SK-N-SH (cell line): ENCODE measurements at regions of chr2 and their contacts with region 1.

Region 1: GRCh38 chr2:24084386-24085361 is at the start of gene TP53I3:
- DNase-seq: peak; percentile 97
- H3K4me3 ChIP-seq: peak within 1 kb of the TSS; percentile 66 to 72
- H3K27ac ChIP-seq: peak within 1 kb of the TSS; percentile 86 to 95
- H3K4me1 ChIP-seq: peaks cover 0 to 21% of the 10 kb centered on the region in 2 experiments; a peak in 2 of 4 replicates
- H3K27me3 ChIP-seq: no peaks in the 10 kb centered on the region
- CTCF ChIP-seq: peak; percentile 94
- EP300 ChIP-seq: peak in 1 of 2 experiments; percentile 32; a peak in 1 of 4 replicates
- RAD21 ChIP-seq: peak; percentile 66
- polyA plus RNA-seq, gene TP53I3: 110 and 116 TPM in 2 replicates

Region 2: DNA sequence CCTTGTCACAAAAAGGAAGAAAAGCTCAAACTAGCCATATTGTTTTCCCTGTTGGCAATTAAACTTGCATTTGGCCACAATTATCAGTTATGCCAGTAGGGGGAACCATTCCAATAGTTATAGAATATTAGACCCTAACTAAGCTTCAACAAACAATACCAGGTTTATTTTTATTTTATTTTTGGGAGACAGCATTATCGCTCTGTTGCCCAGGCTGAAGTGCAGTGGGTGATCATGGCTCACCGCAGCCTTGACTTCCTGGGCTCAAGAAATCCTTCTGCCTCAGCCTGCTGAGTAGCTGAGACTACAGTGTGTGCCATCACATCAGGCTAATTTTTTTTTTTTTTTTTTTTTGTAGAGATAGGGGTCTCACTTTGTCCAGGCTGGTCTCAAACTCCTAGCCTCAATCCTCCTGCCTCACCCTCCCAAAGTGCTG is 259.9 kb before region 1 on chr2:
- CTCF ChIA-PET with region 1: interaction called, 68 read pairs
- POLR2A ChIA-PET with region 1: interaction called, 4 read pairs
- DNase-seq: peak; percentile 65
- H3K4me3 ChIP-seq: no peak overlapping the region
- H3K27ac ChIP-seq: no peak overlapping the region
- H3K4me1 ChIP-seq: no peaks in the 10 kb centered on the region; a peak in 1 of 4 replicates
- H3K27me3 ChIP-seq: no peaks in the 10 kb centered on the region
- CTCF ChIP-seq: peak; percentile 94
- EP300 ChIP-seq: no peak
- RAD21 ChIP-seq: peak; percentile 85

Region 3: GRCh38 chr2:23939987-23940717 is 144.5 kb before region 1 on chr2 and contains the start of gene UBXN2A:
- CTCF ChIA-PET with region 1: interaction called, 10 read pairs
- POLR2A ChIA-PET with region 1: interaction called, 4 read pairs
- DNase-seq: peak; percentile 97
- H3K4me3 ChIP-seq: peak within 1 kb of the TSS; percentile 73 to 91
- H3K27ac ChIP-seq: peak within 1 kb of the TSS; percentile 63 to 88
- H3K4me1 ChIP-seq: peaks cover 7 to 14% of the 10 kb centered on the region in 2 experiments; a peak in 3 of 4 replicates
- H3K27me3 ChIP-seq: no peaks in the 10 kb centered on the region
- CTCF ChIP-seq: no peak
- EP300 ChIP-seq: no peak
- RAD21 ChIP-seq: no peak
- polyA plus RNA-seq, gene UBXN2A: 5.8 and 7.1 TPM in 2 replicates

Region 4: DNA sequence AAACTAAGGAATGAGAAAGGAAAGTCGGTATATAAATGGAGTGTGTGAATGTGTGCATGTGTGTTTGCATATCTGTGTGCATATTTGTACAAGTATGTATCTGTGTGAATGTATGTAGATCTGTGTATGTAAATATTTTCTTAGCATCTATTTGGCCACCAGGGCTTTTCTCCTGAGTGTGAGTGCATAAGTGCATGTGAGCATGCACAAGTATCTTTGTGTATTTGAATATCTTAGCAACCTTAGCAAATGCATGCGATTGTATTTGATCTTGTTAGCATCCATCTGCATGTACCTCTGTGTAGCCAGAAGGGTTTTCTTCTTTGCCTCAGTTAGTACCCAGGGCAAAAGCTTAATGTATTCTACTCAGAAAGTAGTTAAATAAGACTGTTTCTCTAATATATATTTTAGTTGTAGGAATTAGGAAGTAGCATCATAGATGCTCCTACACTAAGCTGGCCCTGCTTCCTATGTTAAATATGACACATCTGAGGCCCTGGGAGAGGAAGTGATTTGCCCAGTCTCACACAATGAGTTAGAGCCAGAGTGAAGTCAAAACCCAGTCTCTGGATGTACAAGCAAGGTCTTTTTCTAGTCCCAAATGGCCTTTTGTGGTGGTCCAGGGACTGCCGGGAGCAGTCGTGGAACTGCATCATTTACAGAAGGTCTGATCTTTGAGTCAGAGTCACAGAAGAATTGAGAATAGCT is 26.0 kb before region 1 on chr2:
- CTCF ChIA-PET with region 1: interaction called, 10 read pairs
- POLR2A ChIA-PET with region 1: no interaction called
- DNase-seq: no peak
- H3K4me3 ChIP-seq: no peak overlapping the region
- H3K27ac ChIP-seq: no peak overlapping the region
- H3K4me1 ChIP-seq: peaks cover 0 to 9% of the 10 kb centered on the region in 2 experiments; a peak in 1 of 4 replicates
- H3K27me3 ChIP-seq: no peaks in the 10 kb centered on the region
- CTCF ChIP-seq: peak; percentile 8; the same call in 1 of the 2 replicates
- EP300 ChIP-seq: no peak
- RAD21 ChIP-seq: no peak

Region 5: DNA sequence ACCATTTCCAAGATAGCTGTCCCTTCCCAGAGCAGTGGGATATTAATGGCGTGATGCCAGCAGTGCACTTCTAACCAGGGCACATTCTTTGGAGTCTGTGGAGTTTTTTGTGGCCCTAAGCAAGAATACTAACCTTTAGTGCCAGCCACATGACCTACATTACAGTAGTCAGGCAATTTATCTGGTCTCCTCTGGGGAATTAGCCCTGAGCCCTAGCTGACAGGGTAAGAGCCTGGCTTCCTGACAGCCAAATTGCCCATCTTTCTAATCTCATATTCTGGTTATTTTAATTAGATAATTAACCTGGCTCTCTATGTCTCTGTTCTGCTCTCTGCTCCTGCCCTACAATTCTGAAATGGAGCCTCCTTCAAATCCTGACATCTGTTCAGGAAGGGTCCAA is 33.2 kb after region 1 on chr2:
- CTCF ChIA-PET with region 1: interaction called, 31 read pairs
- POLR2A ChIA-PET with region 1: interaction called, 28 read pairs
- DNase-seq: peak; percentile 84
- H3K4me3 ChIP-seq: no peak overlapping the region
- H3K27ac ChIP-seq: peak overlapping the region in 1 of 2 experiments; percentile 53; a peak in 1 of 4 replicates
- H3K4me1 ChIP-seq: peaks cover 0 to 11% of the 10 kb centered on the region in 2 experiments; a peak in 3 of 4 replicates
- H3K27me3 ChIP-seq: no peaks in the 10 kb centered on the region
- CTCF ChIP-seq: no peak
- EP300 ChIP-seq: peak in 1 of 2 experiments; percentile 85; a peak in 1 of 4 replicates
- RAD21 ChIP-seq: no peak; the same call in 1 of the 2 replicates

Region 6: DNA sequence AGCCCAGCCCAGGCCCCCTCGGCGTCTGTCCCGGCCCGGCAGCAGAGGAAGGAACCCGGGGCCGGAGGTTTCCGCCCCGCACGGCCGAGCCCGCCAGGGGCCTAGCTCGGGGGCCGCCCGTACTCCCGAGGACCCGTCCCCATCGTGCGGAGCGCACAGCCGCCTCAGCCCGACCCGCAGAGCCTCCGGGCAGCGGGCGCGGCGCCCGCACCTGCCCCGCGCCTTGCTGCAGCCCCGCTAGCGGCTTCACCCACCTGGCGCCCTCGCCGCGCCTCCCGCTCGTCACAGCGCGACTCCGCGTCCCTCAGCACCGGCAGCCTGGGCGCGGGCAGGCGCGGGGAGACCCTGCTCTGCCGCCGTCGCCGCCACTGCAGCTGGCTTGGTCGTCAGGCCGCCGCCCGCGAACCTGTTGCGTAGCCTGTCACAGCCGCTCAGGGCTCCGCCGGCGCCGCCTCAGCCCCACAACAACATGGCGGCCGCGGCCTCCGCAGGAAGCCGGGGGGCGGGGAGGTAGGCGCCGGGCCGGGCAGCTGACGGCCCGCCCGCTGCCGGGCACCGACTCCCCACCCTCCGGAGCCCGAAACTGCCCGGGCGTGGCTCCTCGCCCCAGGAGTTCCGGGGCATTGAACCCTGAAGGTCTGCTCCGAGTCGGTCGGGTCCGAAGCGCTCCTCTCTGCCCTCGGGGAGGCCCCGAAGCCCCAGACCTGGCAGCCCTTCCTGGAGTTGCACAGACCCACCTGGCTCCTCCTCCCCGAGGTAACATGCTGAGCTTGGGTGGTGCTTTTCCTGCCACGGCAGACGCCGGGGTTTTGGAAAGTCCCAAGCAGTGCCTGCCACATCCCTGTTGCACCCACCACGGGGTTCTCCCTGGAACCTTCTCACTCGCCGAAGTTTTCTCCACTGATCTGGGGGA is 275.6 kb after region 1 on chr2 and contains the start of gene ITSN2:
- CTCF ChIA-PET with region 1: interaction called, 14 read pairs
- POLR2A ChIA-PET with region 1: interaction called, 14 read pairs
- DNase-seq: peak; percentile 96
- H3K4me3 ChIP-seq: peak within 1 kb of the TSS; percentile 91 to 92
- H3K27ac ChIP-seq: peak within 1 kb of the TSS; percentile 37 to 91
- H3K4me1 ChIP-seq: peaks cover 4 to 11% of the 10 kb centered on the region in 2 experiments; a peak in 2 of 4 replicates
- H3K27me3 ChIP-seq: no peaks in the 10 kb centered on the region
- CTCF ChIP-seq: no peak
- EP300 ChIP-seq: 0 out of 4 replicates have a peak, but pooled peaks of 1 of the 2 experiments have one; percentile 16
- RAD21 ChIP-seq: no peak
- polyA plus RNA-seq, gene ITSN2: 11.9 TPM in 2 replicates

Region 7: GRCh38 chr2:24827321-24828237 is 742.9 kb after region 1 on chr2:
- CTCF ChIA-PET with region 1: interaction called, 10 read pairs
- POLR2A ChIA-PET with region 1: interaction called, 4 read pairs
- DNase-seq: peak; percentile 94
- H3K4me3 ChIP-seq: peak overlapping the region in 1 of 2 experiments; percentile 22; a peak in 1 of 4 replicates
- H3K27ac ChIP-seq: no peak overlapping the region
- H3K4me1 ChIP-seq: peaks cover 7 to 11% of the 10 kb centered on the region in 2 experiments; a peak in 1 of 4 replicates
- H3K27me3 ChIP-seq: no peaks in the 10 kb centered on the region
- CTCF ChIP-seq: peak; percentile 98
- EP300 ChIP-seq: no peak
- RAD21 ChIP-seq: peak; percentile 99